AG04450 (cell line): ENCODE measurements at regions of chr6 and their contacts with region 1.

Region 1: DNA sequence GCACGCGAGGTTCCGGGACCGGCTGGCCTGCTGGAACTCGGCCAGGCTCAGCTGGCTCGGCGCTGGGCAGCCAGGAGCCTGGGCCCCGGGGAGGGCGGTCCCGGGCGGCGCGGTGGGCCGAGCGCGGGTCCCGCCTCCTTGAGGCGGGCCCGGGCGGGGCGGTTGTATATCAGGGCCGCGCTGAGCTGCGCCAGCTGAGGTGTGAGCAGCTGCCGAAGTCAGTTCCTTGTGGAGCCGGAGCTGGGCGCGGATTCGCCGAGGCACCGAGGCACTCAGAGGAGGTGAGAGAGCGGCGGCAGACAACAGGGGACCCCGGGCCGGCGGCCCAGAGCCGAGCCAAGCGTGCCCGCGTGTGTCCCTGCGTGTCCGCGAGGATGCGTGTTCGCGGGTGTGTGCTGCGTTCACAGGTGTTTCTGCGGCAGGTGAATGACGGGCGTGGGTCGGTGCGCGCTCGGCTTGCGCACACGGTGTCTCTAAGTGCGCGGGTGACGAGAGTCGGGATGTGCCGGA is at the start of gene CDKN1A:
- DNase-seq: peak; percentile 86
- H3K4me3 ChIP-seq: peak within 1 kb of the TSS; percentile 99
- H3K27ac ChIP-seq: peak within 1 kb of the TSS; percentile 96
- H3K27me3 ChIP-seq: no peaks in the 10 kb centered on the region
- CTCF ChIP-seq: no peak
- polyA plus RNA-seq, gene CDKN1A: 722 and 830 TPM in 2 replicates

Region 2: GRCh38 chr6:36499918-36500317 is 178.7 kb before region 1 on chr6:
- CTCF ChIA-PET with region 1: no interaction called
- POLR2A ChIA-PET with region 1: interaction called, 14 read pairs
- DNase-seq: no peak
- H3K4me3 ChIP-seq: no peak overlapping the region
- H3K27ac ChIP-seq: no peak overlapping the region
- H3K27me3 ChIP-seq: no peaks in the 10 kb centered on the region
- CTCF ChIP-seq: no peak

Region 3: GRCh38 chr6:36615018-36615761 is 63.4 kb before region 1 on chr6:
- CTCF ChIA-PET with region 1: interaction called, 36 read pairs
- POLR2A ChIA-PET with region 1: interaction called, 8 read pairs
- DNase-seq: peak; percentile 39
- H3K4me3 ChIP-seq: no peak overlapping the region
- H3K27ac ChIP-seq: peak overlapping the region; percentile 11
- H3K27me3 ChIP-seq: no peaks in the 10 kb centered on the region
- CTCF ChIP-seq: peak; percentile 84

Region 4: DNA sequence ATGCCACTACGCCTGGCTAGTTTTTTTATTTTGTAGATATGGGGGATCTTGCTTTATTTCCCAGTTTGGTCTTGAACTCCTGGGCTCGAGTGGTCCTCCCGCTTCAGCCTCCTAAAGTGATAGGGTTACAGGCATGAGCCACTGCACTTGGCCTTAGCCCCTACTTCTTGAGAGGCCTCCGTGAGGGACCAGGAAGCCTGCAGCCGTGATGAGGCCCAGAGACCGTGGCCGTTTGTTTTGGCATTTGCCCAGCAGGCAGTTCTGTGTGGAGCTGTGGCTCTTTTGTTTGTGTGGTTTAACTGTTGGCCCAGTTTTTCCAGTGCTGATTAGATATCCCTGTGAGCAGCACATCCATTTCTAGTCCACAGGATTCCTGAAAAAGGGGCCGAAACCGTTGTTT is 44.7 kb before region 1 on chr6:
- CTCF ChIA-PET with region 1: interaction called, 10 read pairs
- POLR2A ChIA-PET with region 1: interaction called, 37 read pairs
- DNase-seq: peak; percentile 60
- H3K4me3 ChIP-seq: no peak overlapping the region
- H3K27ac ChIP-seq: peak overlapping the region; percentile 47
- H3K27me3 ChIP-seq: no peaks in the 10 kb centered on the region
- CTCF ChIP-seq: no peak

Region 5: GRCh38 chr6:36659271-36659670 is 19.3 kb before region 1 on chr6:
- CTCF ChIA-PET with region 1: no interaction called
- POLR2A ChIA-PET with region 1: interaction called, 10 read pairs
- DNase-seq: no peak
- H3K4me3 ChIP-seq: no peak overlapping the region
- H3K27ac ChIP-seq: no peak overlapping the region
- H3K27me3 ChIP-seq: no peaks in the 10 kb centered on the region
- CTCF ChIP-seq: no peak

Region 6: GRCh38 chr6:36715474-36715873 is 36.9 kb after region 1 on chr6:
- CTCF ChIA-PET with region 1: no interaction called
- POLR2A ChIA-PET with region 1: no interaction called
- DNase-seq: no peak
- H3K4me3 ChIP-seq: no peak overlapping the region
- H3K27ac ChIP-seq: no peak overlapping the region
- H3K27me3 ChIP-seq: peaks cover 38% of the 10 kb centered on the region
- CTCF ChIP-seq: no peak

Region 7: DNA sequence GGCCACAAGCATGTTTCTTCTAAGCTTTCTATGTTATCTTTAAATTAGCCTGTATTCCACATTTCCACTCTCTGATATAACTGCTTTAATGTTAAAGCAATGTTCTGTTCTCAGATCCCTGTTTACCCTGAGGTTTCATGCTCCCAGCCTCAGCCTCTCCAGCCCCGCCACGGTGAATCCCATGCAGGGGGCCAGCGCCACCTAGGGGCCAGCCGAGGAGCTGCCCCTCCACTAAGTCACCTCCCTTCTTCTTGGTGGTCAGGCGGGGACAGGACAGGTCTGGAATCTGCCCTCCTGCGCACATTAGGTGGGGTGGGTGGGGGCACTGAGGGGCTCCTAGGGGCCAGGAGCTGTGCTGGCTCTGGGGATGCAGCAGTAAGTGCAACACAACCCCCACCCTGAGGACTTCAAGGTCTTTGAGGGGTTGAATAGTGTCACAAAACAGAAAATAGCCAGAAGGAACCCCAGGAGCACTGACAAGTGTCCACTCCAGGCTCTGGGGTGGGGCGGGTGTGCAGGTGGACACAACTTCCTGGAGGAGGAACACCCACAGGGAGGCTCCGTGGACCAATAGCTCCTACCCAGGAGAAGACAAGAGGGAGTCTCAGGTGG is 80.7 kb after region 1 on chr6:
- CTCF ChIA-PET with region 1: interaction called, 21 read pairs
- POLR2A ChIA-PET with region 1: interaction called, 5 read pairs
- DNase-seq: peak; percentile 45
- H3K4me3 ChIP-seq: no peak overlapping the region
- H3K27ac ChIP-seq: no peak overlapping the region
- H3K27me3 ChIP-seq: peaks cover 4% of the 10 kb centered on the region
- CTCF ChIP-seq: peak; percentile 99